H1 (cell line): ENCODE measurements at regions of chr14 and their contacts with region 1.

Region 1: GRCh38 chr14:56808383-56809269 is 1.7 kb downstream of the OTX2 start:
- DNase-seq: peak in 1 of 2 experiments; percentile 78
- H3K4me3 ChIP-seq: peak overlapping the region; percentile 65 to 90 (median 81)
- H3K27ac ChIP-seq: no peak overlapping the region
- H3K4me1 ChIP-seq: peaks cover 10 to 27% (median 19%) of the 10 kb centered on the region in 4 experiments
- H3K27me3 ChIP-seq: peaks cover 19 to 71% (median 56%) of the 10 kb centered on the region in 4 experiments; a peak in 6 of 7 replicates
- CTCF ChIP-seq: no peak
- EP300 ChIP-seq: no peak
- POLR2A ChIP-seq: no peak
- RAD21 ChIP-seq: peak in 1 of 2 experiments; percentile 1; a peak in 1 of 4 replicates

Region 2: GRCh38 chr14:56797569-56798446 is 10.8 kb before region 1 on chr14:
- CTCF ChIA-PET with region 1: interaction called, 19 read pairs
- POLR2A ChIA-PET with region 1: interaction called, 71 read pairs
- DNase-seq: peak in 1 of 2 experiments; percentile 79
- H3K4me3 ChIP-seq: peak overlapping the region; percentile 27 to 83 (median 49)
- H3K27ac ChIP-seq: no peak overlapping the region
- H3K4me1 ChIP-seq: peaks cover 18 to 31% (median 26%) of the 10 kb centered on the region in 4 experiments; a peak in 6 of 7 replicates
- H3K27me3 ChIP-seq: peaks cover 2 to 52% (median 43%) of the 10 kb centered on the region in 4 experiments
- CTCF ChIP-seq: no peak
- EP300 ChIP-seq: no peak
- POLR2A ChIP-seq: peak in 1 of 2 experiments; percentile 64; a peak in 1 of 3 replicates
- RAD21 ChIP-seq: no peak

Region 3: DNA sequence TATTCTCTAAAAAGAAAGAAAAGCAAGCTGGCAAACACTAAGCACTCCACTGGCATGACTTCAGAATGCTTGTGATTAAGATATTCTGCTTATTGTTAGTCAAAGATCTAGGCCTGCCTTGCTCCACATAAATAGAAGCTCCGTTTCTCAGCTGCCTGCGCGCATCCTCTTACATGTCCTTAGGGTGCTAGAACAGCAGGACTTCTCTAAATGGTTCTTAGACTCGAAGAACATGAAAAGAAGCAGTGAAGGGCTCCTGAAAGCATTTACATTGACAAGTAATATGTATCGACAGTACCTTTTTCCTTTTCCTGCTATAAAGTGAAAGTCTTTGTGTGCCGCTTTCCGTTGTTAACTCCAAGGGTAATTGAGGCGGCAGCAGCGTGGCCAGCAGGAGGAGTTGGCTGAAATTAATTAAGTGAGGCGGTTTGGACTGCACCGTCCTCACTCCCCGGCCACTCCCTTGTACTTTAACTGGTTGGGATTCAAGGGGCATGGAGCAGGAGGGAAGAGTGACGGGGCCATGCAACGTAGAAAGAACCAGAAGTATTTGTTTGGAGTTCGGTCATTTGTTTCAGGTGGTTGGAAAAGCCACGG is 35.9 kb after region 1 on chr14:
- CTCF ChIA-PET with region 1: no interaction called
- POLR2A ChIA-PET with region 1: interaction called, 10 read pairs
- DNase-seq: no peak
- H3K4me3 ChIP-seq: peak overlapping the region in 1 of 4 experiments; percentile 31; a peak in 2 of 8 replicates
- H3K27ac ChIP-seq: no peak overlapping the region
- H3K4me1 ChIP-seq: peaks cover 7 to 29% (median 24%) of the 10 kb centered on the region in 4 experiments; a peak in 6 of 7 replicates
- H3K27me3 ChIP-seq: peaks cover 9 to 51% (median 50%) of the 10 kb centered on the region in 4 experiments
- CTCF ChIP-seq: peak in 2 of 3 experiments; percentile 23 to 36; a peak in 2 of 4 replicates
- EP300 ChIP-seq: no peak
- POLR2A ChIP-seq: no peak
- RAD21 ChIP-seq: peak; percentile 1 to 35; a peak in 2 of 4 replicates

Region 4: DNA sequence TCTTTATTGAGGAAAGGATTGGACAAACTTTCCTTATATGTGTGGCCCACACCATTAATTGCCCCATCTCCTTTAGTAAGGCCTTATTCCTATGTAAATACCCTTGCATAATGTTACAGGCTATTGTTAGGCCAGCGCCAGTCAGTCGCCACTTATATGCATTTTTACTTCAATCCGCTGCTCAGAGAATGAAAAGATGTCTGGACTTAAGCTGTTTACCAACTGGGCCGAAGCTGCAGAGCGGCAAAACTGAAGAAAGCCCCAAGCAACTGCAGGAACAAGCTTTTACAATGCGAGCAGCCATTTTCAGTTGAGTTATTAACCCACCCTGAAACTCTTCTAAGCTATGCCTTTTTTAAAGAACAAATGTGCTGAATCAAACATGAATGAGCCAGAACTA is 93.8 kb after region 1 on chr14:
- CTCF ChIA-PET with region 1: interaction called, 4 read pairs
- POLR2A ChIA-PET with region 1: interaction called, 12 read pairs
- DNase-seq: no peak
- H3K4me3 ChIP-seq: peak overlapping the region in 1 of 4 experiments; percentile 43; a peak in 2 of 8 replicates
- H3K27ac ChIP-seq: peak overlapping the region; percentile 66
- H3K4me1 ChIP-seq: peaks cover 7 to 54% (median 38%) of the 10 kb centered on the region in 4 experiments; a peak in 6 of 7 replicates
- H3K27me3 ChIP-seq: no peaks in the 10 kb centered on the region
- CTCF ChIP-seq: no peak
- EP300 ChIP-seq: no peak
- POLR2A ChIP-seq: no peak
- RAD21 ChIP-seq: no peak